ENCODE measurements at regions of chr18 and their contacts with region 1.

Region 1: DNA sequence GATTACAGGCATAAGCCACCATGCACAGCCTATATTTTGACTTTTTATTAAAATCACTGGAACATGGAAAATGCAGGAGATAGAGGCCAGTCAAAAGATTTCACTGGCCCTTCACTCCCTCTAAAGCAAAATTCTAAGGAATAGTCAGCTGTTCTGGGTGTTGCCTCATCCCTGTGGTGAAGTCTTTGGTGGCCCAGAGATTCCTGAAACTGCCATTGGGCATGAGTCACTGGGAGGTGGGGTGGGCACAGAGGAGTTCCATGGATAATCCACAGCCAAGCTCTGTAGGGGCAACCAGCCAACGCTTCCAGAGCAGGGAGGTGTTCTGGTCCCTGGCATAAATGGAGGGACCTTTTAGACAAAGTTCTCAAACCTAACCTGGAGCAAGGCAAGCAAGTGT is 89.7 kb upstream of the TTC39C start:
- DNase-seq: no peak
- H3K4me3 ChIP-seq: no peak overlapping the region
- H3K27ac ChIP-seq: no peak overlapping the region
- H3K4me1 ChIP-seq: peaks cover 2% of the 10 kb centered on the region
- H3K27me3 ChIP-seq: no peaks in the 10 kb centered on the region
- CTCF ChIP-seq: no peak
- POLR2A ChIP-seq: no peak

Region 2: DNA sequence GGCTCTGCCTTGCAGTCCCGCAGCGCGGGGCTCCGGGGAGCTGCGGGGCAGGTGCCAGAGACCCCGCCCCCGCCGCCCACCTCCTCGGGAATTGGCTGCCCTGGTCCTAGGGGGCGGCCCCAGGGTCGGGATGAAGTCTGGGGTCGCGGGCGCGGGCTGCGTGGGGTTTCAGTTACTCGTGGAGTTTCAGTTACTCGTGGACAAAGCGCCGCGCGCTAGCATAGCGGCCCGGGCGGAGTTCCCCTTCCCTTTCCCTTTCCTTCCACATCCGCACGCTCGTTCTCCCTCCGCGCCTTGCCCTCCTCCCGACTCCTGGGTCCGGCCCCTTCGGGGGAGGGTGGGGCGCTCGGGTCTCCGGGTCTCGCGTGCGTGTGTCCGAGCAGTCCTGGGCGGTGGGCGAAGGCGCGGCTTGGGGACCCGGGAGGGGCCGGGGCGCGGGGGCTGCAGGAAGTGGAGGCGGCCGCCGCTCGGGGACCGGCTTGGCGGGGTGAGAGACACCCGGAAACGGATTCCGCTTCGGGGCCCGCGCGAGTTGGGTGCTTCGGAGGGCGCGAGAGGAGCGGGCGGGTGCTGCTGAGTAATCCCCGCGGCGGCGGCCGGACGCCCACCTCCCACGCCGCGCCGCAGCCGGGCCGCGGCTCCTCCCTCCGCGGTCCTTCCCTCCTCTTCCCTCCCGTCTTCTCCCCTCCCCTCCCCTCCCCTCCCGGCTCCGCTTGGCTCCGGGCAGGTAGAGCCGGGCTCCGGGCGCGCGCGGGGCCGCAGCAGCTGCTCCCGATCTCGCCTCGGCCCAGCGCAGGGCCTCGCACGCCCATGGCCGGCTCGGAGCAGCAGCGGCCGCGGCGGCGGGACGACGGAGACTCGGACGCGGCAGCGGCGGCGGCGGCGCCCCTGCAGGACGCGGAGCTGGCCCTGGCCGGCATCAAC is 89.5 kb after region 1 on chr18 and contains the start of gene TTC39C:
- intact Hi-C with region 1: loop called (anchors 5 kb)
- DNase-seq: peak; percentile 54
- H3K4me3 ChIP-seq: peak within 1 kb of the TSS; percentile 72 to 87
- H3K27ac ChIP-seq: peak within 1 kb of the TSS; percentile 82 to 86
- H3K4me1 ChIP-seq: no peaks in the 10 kb centered on the region
- H3K27me3 ChIP-seq: no peaks in the 10 kb centered on the region
- CTCF ChIP-seq: no peak
- POLR2A ChIP-seq: no peak
- total RNA-seq, gene TTC39C: 31.2 to 40.0 TPM

Region 3: GRCh38 chr18:24068945-24069693 is 144.3 kb after region 1 on chr18:
- intact Hi-C with region 1: no loop called
- DNase-seq: no peak
- H3K4me3 ChIP-seq: no peak overlapping the region
- H3K27ac ChIP-seq: no peak overlapping the region
- H3K4me1 ChIP-seq: no peaks in the 10 kb centered on the region
- H3K27me3 ChIP-seq: no peaks in the 10 kb centered on the region
- CTCF ChIP-seq: no peak
- POLR2A ChIP-seq: no peak

Measured in prostate gland (tissue), 2 donors.